Activated naive CD4-positive, alpha-beta T cell treated with anti-CD3 and anti-CD28 coated beads for 36 hours (primary cell): ENCODE measurements at regions of chrX and their contacts with region 1.

Region 1: DNA sequence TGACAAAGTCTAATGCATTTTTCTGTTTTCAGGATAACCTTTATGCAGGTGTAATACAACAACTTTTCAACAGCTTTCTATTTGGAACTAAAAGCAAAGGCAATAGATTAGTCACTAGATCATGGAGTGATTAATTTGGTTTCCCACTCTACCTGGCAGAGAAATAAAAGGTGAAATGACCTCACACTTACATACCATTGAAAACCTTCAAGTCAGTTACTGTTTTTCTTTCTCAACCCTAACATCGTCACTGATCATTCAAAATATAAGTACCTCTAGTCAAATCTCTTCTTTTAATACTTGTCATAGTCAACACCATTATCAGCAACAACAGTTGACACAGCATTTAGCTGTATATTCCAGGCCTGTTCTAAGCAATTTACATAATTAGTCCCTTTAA is 85.1 kb upstream of the ZCCHC13 start:
- DNase-seq: no peak
- H3K4me3 Mint-ChIP-seq: no peak overlapping the region
- H3K27ac Mint-ChIP-seq: no peak overlapping the region
- H3K4me1 Mint-ChIP-seq: peaks cover 18% of the 10 kb centered on the region
- H3K27me3 Mint-ChIP-seq: no peaks in the 10 kb centered on the region

Region 2: DNA sequence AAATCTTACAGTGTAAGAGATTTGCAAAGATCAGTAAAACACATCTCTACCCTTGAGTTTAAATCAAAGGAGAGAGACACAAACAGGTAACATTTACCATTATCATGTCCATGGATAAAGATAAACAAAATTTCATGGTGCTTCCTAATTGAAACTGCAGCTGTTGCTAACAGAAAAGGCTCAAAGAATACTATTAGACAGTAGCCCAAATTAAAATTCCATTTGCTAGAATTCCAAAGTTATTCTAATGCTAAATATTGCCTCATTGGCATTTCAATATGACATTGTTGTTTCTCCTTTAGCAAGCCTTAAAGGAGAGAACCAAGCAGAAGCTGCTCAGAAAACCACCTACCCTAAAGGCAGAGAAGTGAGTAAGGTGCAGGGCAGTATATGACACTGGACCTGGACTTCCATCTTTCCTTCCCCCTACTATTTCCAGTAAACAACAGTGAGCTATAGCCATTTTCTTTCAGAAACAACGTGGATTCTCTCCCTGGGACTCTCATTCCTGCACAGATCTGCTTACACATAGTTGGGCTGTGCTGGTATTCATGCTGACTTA is 65.6 kb after region 1 on chrX:
- CTCF ChIA-PET with region 1: no interaction called
- intact Hi-C with region 1: loop called (anchors 2 kb)
- DNase-seq: no peak
- H3K4me3 Mint-ChIP-seq: no peak overlapping the region
- H3K27ac Mint-ChIP-seq: no peak overlapping the region
- H3K4me1 Mint-ChIP-seq: peaks cover 25% of the 10 kb centered on the region
- H3K27me3 Mint-ChIP-seq: no peaks in the 10 kb centered on the region

Region 3: GRCh38 chrX:74351760-74352159 is 132.9 kb after region 1 on chrX:
- CTCF ChIA-PET with region 1: no interaction called
- intact Hi-C with region 1: no loop called
- DNase-seq: no peak
- H3K4me3 Mint-ChIP-seq: peak overlapping the region; percentile 21
- H3K27ac Mint-ChIP-seq: no peak overlapping the region
- H3K4me1 Mint-ChIP-seq: peaks cover 8% of the 10 kb centered on the region
- H3K27me3 Mint-ChIP-seq: no peaks in the 10 kb centered on the region